IMR-90 (cell line): ENCODE measurements at regions of chr5 and their contacts with region 1.

Region 1: GRCh38 chr5:131634996-131635754 is at the start of gene RAPGEF6:
- DNase-seq: peak; percentile 100
- ATAC-seq: peak; percentile 92
- H3K4me3 ChIP-seq: peak within 1 kb of the TSS; percentile 66
- H3K27ac ChIP-seq: peak within 1 kb of the TSS; percentile 93
- H3K4me1 ChIP-seq: peaks cover 5% of the 10 kb centered on the region
- H3K27me3 ChIP-seq: no peaks in the 10 kb centered on the region
- CTCF ChIP-seq: no peak
- POLR2A ChIP-seq: peak; percentile 87
- RAD21 ChIP-seq: no peak
- total RNA-seq, gene RAPGEF6: 18.8 and 30.3 TPM in 2 replicates

Region 2: DNA sequence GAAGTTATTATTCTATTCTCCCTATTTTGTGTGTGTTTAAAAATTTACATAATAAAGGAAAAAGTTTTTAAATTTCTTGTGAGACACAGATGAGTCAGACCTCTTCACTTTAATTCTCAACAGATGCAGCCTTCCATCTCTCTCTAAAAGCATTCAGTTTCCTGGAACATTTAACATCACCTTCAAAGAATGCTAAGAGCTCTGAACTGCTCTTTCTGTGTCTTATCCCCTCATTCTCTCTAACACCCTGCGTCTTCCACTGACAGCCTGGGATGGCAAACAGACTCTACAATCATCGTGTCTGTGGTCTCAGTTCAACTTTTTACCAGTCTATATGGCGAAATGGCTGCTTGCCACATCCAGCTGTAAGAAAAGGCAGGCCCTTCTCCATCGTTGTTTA is 643.1 kb before region 1 on chr5:
- CTCF ChIA-PET with region 1: no interaction called
- POLR2A ChIA-PET with region 1: no interaction called
- dilution Hi-C with region 1: no loop called
- in situ Hi-C with region 1: no loop called
- intact Hi-C with region 1: no loop called
- DNase-seq: no peak
- ATAC-seq: no peak
- H3K4me3 ChIP-seq: no peak overlapping the region
- H3K27ac ChIP-seq: no peak overlapping the region
- H3K4me1 ChIP-seq: no peaks in the 10 kb centered on the region
- H3K27me3 ChIP-seq: no peaks in the 10 kb centered on the region
- CTCF ChIP-seq: no peak
- POLR2A ChIP-seq: no peak
- RAD21 ChIP-seq: no peak

Region 3: DNA sequence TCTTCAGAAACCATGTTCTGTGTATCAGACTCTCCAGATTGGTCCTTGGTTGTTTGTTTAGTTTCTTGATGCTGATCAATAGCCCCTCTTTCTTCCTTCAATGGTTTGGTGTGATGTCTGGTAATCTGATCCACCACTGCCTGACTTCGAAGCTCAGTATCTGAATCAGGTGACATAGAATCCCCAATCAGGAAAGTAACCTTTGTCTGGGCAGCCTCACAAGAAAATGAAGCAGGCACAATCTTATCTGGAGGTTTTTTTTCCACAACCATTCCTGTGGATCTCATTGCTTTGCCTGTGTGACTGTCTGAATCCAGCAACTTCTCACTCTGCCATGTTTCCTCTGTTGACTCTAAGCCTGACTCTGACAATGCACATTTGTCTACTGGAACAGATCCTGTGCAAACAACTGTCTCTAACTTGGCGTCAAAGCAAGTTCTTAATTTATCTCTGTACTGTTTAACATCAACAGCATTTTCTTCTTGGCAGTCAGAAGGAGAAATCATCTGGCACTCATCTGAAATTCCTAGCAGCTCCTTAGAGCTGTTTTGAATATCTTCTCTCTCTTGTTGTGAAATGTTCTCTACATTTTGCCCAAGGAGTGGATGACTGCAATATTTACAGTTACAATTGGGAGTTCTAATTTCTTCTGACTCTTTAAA is 37.0 kb after region 1 on chr5:
- CTCF ChIA-PET with region 1: no interaction called
- POLR2A ChIA-PET with region 1: no interaction called
- dilution Hi-C with region 1: no loop called
- in situ Hi-C with region 1: no loop called
- intact Hi-C with region 1: loop called (anchors 5 kb)
- DNase-seq: peak; percentile 95
- ATAC-seq: peak; percentile 91
- H3K4me3 ChIP-seq: no peak overlapping the region
- H3K27ac ChIP-seq: peak overlapping the region; percentile 97; the same call in 1 of the 2 replicates
- H3K4me1 ChIP-seq: peaks cover 20% of the 10 kb centered on the region
- H3K27me3 ChIP-seq: no peaks in the 10 kb centered on the region
- CTCF ChIP-seq: no peak
- POLR2A ChIP-seq: no peak
- RAD21 ChIP-seq: no peak